HEK293T (cell line): ENCODE measurements at regions of chr16 and their contacts with region 1.

Region 1: GRCh38 chr16:30775392-30776188 is 11.4 kb downstream of the ZNF629 start:
- DNase-seq: peak; percentile 97

Region 2: DNA sequence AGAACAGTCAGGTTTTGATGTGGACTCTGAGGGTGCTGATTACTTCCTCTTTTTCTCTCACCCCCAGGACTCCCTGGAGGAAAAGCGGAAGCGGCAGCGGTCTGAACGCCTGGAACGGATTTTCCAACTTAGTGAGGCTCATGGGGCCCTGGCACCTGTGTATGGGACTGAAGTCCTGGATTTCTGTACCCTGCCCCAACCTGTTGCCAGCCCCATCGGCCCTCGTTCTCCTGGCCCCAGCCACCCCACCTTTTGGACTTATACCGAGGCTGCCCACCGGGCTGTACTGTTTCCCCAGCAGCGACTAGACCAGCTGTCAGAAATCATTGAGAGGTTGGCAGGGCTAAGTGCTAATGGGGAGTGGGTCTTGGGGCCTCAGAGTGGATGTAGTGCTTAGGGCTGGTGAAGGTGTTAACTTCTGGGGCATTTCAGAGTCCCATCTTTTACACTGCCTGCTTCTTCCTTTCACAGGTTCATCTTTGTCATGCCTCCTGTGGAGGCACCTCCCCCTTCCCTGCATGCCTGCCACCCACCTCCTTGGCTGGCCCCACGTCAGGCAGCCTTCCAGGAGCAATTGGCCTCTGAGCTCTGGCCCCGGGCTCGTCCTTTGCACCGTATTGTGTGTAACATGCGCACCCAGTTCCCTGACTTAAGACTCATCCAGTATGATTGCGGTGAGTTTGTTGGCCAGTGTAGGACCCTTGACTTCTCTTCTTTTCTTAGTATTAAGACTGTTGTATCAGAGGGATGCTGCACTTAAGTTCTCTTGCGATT is 46.5 kb before region 1 on chr16:
- CTCF ChIA-PET with region 1: no interaction called
- POLR2A ChIA-PET with region 1: no interaction called
- DNase-seq: no peak

Region 3: DNA sequence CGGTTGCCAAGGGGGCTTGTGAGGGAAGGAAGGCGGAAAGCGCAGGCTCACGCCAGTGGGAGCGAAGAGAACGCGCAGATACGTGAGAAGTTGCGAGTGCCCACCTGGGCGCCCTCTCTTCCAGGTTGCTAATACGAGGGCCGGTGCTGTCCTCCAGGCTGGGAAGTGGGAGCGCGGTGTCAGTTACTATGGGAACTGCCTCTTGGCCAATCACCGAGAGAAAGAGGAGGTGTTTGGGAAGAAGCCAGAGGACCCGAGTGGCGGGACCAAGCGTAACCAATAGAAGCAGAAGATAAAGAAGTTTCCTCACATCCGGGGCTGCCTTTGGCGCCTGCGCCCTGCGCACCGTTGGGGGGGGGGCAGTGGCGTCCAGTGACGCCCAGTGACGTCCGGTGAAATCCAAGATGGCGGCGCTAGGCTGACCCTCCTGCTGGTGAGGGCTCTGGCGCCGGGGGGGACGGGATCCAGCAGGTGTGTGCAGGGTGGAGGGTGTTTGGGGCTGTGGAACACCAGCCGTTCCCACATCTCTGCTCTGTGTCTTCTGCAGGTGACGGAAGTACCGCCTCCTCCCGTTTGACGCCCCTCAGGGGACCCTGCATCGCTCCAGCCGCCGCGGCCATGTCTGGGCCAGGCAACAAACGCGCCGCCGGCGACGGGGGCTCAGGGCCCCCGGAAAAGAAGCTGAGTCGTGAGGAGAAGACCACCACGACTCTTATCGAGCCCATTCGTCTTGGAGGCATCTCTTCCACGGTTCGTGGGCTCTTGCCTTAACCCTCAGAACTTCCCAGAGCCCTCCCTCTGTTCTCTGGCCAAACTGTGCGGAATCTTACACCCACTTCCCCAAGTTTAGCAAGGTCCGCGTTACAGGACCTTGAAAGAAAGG is 13.4 kb before region 1 on chr16 and contains the starts of genes CFAP119 and RNF40:
- CTCF ChIA-PET with region 1: no interaction called
- POLR2A ChIA-PET with region 1: interaction called, 44 read pairs
- DNase-seq: peak; percentile 100

Region 4: GRCh38 chr16:30786936-30787612 is 11.5 kb after region 1 on chr16 and contains the start of gene ZNF629:
- CTCF ChIA-PET with region 1: no interaction called
- POLR2A ChIA-PET with region 1: interaction called, 20 read pairs
- DNase-seq: peak; percentile 86

Region 5: DNA sequence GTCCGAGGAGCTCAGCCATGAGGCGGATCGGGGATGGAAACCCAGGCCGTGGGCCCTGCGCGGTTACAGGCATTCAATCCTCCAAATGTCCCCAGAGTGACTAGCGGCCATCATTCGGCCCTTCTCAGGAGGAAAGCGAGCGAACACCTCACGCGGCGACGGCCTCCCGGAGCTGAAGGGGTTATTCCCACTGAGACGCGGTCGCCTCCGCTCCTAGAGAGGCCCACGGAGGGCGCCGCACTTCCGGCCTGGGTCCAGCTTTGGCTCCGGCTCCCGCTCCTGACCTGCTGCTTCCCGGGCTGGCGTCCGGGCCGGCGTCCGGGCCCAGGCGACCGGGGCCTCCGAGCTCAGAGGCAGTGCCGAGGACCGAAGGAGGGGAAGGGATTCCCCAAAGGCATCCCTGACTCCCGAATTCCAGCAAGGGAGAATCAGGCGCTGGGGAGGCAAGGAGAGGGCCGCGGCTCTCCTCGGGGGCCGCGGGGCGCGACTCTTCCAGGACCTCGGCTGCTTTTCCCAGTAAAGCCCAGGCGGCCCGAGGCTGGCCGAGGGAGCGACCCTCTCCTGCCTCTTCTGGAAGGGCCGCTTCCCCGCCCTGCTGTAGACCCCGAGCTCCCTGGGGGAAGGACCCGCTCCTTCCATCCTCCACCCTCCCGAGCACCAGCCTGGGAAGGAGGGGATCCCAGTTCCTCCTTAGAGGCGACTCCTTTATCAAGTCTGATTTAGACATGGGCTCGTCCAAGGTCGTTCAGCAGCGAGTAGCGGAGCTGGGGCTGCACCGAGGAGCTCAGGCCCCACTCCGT is 30.0 kb after region 1 on chr16:
- CTCF ChIA-PET with region 1: interaction called, 4 read pairs
- POLR2A ChIA-PET with region 1: interaction called, 599 read pairs
- DNase-seq: peak; percentile 95

Region 6: DNA sequence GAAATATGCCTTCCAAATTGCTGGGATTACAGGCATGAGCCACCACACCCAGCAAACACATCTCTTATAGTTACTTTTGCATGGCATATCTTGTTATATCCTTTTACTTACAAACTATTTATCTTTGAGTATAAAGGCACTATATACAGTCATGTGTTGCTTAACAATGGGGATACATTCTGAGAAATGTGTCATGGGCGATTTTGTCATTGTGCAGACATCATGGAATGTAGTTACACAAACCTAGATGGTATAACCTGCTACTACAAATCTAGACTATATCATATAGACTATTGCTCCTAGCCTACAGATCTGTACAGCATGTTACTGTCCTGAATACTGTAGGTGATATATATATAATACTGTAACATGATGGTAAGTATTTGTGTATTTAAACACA is 74.7 kb after region 1 on chr16:
- CTCF ChIA-PET with region 1: no interaction called
- POLR2A ChIA-PET with region 1: no interaction called
- DNase-seq: no peak